Cardiac septum (tissue), 1 donor: ENCODE measurements at regions of chr4 and their contacts with region 1.

Region 1: DNA sequence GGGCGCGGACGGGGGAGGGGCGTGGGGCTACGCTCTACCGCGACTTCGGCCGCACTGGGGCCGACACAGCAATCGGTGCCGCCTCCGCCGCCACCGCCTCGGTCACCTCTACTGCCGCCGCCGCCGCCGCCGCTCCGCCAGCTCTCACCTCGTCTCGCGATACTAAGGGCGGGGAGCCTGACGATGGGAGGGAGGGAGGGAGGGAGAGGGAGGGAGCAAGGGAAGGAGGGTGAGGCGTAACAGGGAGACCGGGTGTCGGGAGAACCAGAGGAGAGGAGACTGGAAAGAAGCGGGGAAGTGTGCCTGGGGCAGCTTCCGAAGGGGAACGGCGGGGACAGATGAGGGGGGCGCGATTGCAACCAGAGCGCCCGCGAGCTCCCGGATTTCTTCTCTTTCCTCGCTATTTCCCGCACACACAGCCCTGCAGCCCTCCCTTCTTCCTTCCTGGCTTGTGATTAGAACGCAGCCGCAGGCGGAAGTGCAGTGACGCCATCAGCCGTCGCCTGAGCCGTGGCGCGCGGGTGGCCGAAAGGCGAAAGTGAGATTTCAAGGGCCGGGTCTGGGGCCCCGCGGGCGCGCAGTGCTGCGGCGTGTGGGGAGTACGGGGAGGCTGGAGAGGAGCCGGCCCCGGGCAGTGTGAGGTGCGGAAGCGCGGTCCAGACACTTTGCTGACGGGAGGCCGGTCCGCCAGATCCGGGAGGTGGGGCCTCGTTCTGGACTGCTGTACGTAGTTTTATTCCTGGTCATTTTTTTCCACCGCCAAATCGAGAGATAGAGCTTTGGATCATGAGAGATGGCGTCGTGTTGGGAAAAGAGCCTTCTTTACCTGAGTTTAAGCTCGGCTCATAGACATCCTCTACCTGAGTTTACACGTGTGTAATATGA is at the start of gene ANKRD17:
- DNase-seq: peak; percentile 97
- total RNA-seq, gene ANKRD17: 59.8 TPM

Region 2: GRCh38 chr4:73069338-73070073 is 189.4 kb before region 1 on chr4 and contains the start of gene COX18:
- intact Hi-C with region 1: loop called (anchors 1 kb)
- DNase-seq: peak; percentile 99
- total RNA-seq, gene COX18: 15.9 TPM

Region 3: GRCh38 chr4:73127839-73128453 is 131.0 kb before region 1 on chr4:
- intact Hi-C with region 1: loop called (anchors 10 kb)
- DNase-seq: no peak

Region 4: DNA sequence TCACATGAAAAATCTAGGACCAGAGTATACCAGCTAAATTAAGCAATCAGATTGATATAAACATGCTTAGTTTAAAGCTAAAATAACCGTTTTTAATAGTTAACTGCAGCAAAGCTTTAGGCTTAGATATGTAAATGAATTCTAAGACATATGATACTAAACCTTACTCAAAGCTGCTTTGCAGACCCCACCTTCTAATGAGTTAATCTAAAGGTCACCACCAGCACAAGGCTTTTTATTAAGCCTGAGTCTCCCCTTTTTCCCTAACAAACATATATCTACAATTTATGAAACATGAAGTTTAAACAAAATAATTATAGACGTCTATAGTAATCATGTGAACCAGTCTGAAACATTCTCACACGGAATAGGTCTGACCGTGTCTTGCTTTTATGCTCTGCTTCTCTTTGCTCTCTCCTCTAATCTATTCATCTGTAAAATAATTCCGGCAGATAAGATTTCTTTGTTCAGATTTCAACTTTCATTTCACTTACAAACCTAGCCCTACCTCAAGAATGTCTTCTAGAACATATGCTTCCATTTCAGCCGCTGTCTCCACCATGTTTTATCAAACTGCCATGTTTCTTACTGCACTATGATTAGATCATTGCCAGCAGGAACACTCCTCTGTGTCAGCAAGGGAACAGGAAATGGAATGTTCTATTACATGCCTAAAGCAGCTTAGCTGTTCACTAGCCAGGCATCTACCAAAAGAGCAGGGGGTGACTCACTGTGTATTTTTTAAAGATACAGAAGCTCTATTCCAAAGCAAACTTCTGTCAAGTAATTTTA is 36.3 kb before region 1 on chr4:
- intact Hi-C with region 1: loop called (anchors 2 kb)
- DNase-seq: no peak

Region 5: DNA sequence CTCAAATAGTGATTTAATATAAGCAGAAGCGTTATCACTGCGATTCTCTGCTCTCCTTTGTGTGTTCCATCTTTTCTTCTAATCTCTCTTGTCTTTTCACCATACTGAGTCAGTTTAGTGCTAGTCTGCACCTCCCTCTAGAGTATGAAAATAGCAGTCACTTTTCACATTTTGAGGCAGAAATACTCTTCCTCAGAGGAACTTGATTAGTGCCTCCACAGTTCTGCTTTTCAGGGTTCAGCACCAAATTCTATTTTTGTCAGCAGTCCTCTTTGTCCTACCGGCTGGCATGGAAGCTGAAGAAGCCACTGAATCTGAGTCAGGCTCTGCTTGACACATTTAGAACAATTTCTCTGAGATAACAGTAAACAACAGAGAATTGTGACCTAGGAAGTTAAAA is 49.4 kb after region 1 on chr4:
- intact Hi-C with region 1: no loop called
- DNase-seq: no peak

Region 6: DNA sequence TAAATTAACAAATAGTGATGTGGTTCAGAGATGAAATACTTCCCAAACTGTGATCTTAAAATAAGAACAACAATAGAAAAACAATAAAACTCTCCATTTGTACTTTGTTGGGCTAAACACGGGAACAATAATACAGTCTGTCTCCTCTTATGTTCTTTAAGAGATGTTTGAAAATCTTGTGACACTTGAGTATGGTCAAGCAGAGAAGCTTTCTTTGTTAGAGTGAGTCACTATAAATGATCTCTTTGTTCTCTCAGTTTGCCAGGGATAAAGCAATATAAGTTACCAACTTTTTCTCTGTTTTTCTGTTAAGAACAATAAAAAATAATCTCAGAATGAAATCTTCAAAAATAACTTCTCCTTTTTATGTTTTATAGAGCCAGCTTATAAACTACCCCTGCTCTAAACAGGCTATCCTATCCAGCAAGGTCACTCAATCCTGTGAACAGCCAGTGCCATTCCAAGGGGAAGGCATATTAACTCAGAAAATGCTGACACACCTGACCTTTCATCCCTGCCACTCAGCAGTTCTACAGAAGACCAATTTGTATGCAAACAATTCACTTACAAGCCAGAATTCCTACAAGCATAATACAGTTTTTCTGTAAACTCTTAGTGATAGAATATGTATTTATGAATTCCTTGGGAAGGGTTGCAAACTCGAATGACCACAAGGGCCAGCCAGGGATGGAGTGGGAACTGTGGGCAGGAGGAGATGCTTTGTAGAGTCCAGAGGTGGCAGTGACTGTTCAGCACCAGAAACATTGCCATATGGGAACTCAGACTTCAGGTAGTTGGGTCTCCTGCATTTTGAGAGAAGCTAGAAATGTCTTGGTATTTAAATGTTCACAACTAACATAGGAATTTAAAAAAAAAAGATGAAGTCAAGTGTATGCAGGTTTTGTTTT is 274.8 kb after region 1 on chr4:
- intact Hi-C with region 1: no loop called
- DNase-seq: no peak